ENCODE measurements at regions of chr11 and their contacts with region 1.

Region 1: GRCh38 chr11:2196970-2197770 is 25.6 kb upstream of the TH start:
- DNase-seq: peak; percentile 62 to 79
- ATAC-seq: peak; percentile 68 to 79 (median 74)
- H3K4me3 ChIP-seq: no peak overlapping the region
- H3K27ac ChIP-seq: no peak overlapping the region
- H3K4me1 ChIP-seq: no peaks in the 10 kb centered on the region
- H3K27me3 ChIP-seq: peaks cover 0 to 30% (median 5%) of the 10 kb centered on the region in 3 donors
- CTCF ChIP-seq: peak; percentile 70

Region 2: DNA sequence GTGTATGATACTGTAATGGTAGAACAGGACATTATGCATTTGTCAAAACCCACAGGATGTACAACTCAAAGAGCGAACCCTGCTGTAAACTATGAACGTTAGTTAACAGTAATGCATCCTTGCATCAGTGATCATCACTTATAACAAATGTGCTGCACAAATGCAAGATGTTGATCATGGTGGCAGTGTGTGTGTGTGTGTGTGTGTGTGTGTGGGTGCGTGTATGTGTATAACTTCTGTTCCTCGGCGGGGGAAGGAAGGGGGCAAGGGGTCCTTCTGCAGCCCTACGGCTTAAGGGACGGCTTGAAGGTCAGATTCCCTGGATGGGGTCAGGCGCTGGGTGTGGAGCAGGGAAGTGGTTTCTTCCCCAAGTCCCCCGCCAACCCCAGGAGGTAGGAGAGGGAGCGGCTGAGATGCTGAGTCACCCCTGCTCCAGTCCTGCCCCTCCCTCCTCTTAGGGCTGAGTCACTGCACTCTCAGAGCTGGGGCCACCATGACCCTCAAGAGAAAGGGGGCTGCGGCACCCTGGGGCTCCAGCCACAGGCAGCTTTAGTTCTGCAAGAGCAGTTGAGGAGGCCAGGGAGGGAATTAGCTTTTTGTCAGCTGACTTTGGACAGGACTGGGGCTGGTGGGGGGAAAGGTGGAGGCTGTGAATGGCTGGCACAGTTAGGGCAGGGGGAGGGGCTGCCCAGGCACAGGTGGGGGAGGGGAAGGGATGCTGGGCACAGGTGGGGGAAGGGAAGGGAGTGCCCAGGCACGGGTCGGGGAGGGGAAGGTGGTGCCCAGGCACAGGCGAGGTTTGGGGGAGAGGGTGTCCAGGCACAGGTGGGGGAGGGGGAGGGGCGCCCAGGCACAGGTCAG is 424.7 kb before region 1 on chr11:
- intact Hi-C with region 1: no loop called
- DNase-seq: peak; percentile 69 to 73
- ATAC-seq: peak; percentile 82 to 94 (median 89)
- H3K4me3 ChIP-seq: no peak overlapping the region
- H3K27ac ChIP-seq: no peak overlapping the region
- H3K4me1 ChIP-seq: no peaks in the 10 kb centered on the region
- H3K27me3 ChIP-seq: no peaks in the 10 kb centered on the region
- CTCF ChIP-seq: no peak

Region 3: GRCh38 chr11:2156416-2157182 is 40.6 kb before region 1 on chr11:
- intact Hi-C with region 1: no loop called
- DNase-seq: peak; percentile 73 to 87
- ATAC-seq: peak; percentile 69 to 83 (median 77)
- H3K4me3 ChIP-seq: no peak overlapping the region
- H3K27ac ChIP-seq: no peak overlapping the region
- H3K4me1 ChIP-seq: peaks cover 2% of the 10 kb centered on the region
- H3K27me3 ChIP-seq: no peaks in the 10 kb centered on the region
- CTCF ChIP-seq: peak; percentile 79

Region 4: GRCh38 chr11:2168286-2169024 is 28.7 kb before region 1 on chr11:
- intact Hi-C with region 1: no loop called
- DNase-seq: no peak
- ATAC-seq: no peak
- H3K4me3 ChIP-seq: no peak overlapping the region
- H3K27ac ChIP-seq: no peak overlapping the region
- H3K4me1 ChIP-seq: peaks cover 5% of the 10 kb centered on the region
- H3K27me3 ChIP-seq: peaks cover 0 to 75% (median 10%) of the 10 kb centered on the region in 3 donors
- CTCF ChIP-seq: no peak

Region 5: DNA sequence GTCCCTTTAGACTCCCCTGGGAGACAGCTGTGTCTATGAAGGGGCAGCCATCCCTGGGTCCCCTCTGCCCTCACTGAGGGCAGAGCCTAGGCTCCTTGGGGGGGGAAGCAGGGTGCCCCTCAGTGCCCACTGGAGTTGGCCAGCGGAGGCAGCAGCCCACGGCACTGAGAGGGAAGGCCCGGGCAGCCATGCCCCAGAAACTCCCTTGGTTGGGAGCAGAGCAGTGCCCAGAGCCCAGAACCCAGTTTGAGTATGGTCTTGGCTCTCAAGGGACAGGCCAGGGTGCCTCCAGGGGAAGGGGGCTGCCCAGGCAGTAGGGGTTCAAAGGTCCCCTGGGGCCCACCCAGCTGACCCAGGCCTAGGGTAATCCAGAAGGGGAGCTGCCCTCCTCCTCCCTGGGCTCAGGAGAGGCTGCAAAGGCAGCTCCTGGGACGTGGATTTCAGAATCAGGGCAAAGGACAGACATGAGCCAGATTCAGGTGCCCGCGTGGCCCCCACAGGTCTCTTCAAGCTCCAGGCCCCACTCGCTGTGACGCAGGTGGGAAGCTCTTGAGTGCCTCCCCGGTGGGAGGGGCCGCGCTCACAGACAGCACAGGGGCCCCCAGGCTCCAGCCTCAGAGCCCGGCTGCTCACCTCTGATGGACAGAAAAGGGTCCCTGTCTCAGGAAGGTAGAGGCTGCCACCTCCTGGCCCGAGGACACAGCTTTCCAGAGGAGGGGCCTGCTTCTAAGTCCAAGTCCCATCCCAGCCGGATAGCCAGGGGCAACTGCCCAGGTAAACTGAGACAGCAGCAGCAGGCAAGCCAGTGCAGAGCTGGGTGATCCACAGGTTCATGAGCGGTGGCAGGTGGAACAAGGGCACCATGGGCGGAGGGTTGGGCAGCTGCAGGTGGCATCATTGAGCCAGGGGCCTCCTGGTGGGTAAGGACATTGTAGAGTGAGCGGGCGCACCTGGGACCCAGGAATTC is 101.9 kb after region 1 on chr11:
- intact Hi-C with region 1: loop called (anchors 2 to 10 kb)
- DNase-seq: peak in 1 of 2 donors; percentile 44
- ATAC-seq: no peak
- H3K4me3 ChIP-seq: no peak overlapping the region
- H3K27ac ChIP-seq: no peak overlapping the region
- H3K4me1 ChIP-seq: no peaks in the 10 kb centered on the region
- H3K27me3 ChIP-seq: peaks cover 0 to 12% (median 1%) of the 10 kb centered on the region in 3 donors
- CTCF ChIP-seq: no peak

Region 6: DNA sequence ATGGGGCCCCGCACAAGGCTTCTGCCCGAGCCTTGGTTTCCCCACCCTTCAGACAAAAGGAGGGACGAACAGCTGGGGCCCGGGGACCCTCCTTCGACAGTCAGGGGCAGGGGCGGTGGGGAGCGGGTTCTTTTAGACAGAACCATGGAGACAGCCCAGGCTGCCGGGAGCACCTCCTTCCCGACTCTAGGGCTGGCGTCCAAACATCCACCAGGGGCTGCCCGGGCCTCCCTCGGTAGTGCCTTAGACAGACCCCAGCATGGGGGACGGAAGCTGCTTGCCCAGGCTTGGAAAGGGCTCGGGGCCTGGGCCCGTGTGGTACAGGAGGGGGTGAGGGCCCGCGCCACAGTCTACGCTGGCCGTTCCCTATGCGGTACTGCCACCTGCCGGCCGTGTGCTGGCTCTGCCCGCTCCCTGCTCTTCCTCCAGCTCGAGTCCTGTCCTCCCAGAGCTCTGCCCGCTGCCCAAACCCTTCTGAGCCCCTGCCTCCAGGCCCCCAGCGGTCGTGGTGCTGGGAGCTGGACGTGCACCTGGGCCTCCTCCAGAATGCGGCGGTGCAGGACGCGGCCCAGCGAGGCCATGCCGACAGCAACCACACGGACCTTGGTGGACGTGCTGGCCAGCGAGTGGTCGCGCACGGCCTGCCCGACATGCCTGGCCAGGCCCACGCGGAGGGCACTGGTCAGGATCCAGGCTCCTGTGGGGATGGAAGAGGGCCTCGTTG is 223.5 kb after region 1 on chr11:
- intact Hi-C with region 1: loop called (anchors 1 to 5 kb)
- DNase-seq: peak; percentile 72 to 86
- ATAC-seq: peak; percentile 92 to 98 (median 96)
- H3K4me3 ChIP-seq: no peak overlapping the region
- H3K27ac ChIP-seq: no peak overlapping the region
- H3K4me1 ChIP-seq: no peaks in the 10 kb centered on the region
- H3K27me3 ChIP-seq: peaks cover 0 to 6% (median 0%) of the 10 kb centered on the region in 3 donors
- CTCF ChIP-seq: peak; percentile 94

Region 7: GRCh38 chr11:2532704-2533586 is 335.8 kb after region 1 on chr11:
- intact Hi-C with region 1: loop called in 1 of 2 experiments (anchors 5 kb)
- DNase-seq: peak; percentile 88 to 95
- ATAC-seq: peak; percentile 85 to 94 (median 89)
- H3K4me3 ChIP-seq: peak overlapping the region; percentile 53
- H3K27ac ChIP-seq: no peak overlapping the region
- H3K4me1 ChIP-seq: peaks cover 8% of the 10 kb centered on the region
- H3K27me3 ChIP-seq: peaks cover 0 to 2% (median 0%) of the 10 kb centered on the region in 3 donors
- CTCF ChIP-seq: peak; percentile 99

Measured in psoas muscle (tissue), 8 donors.